Cardiac septum (tissue), 1 donor: ENCODE measurements at regions of chr16 and their contacts with region 1.

Region 1: DNA sequence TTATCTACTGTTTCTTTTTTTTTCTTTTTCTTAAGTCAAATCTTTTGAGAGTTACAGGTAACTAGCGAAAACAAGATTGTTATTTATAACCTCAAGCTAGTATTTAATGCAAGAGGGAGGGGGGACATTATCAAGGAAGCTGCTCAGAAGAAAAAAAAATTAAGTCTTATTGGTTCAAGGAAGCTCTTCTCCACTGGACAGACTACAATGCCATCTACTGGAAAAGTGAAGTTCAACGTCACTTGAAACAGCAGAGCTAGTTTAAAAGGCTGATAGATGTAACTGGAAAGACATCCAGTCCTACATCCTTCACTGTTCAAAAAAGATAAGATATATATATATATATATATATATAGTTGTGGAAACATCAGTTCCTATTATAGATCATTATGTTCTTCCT is 418.0 kb upstream of the PSMD7 start:
- DNase-seq: no peak

Region 2: GRCh38 chr16:72124761-72125634 is 1753.6 kb before region 1 on chr16:
- intact Hi-C with region 1: loop called (anchors 10 kb)
- DNase-seq: no peak

Region 3: GRCh38 chr16:73565262-73565661 is 313.3 kb before region 1 on chr16:
- intact Hi-C with region 1: loop called (anchors 10 kb)
- DNase-seq: no peak

Region 4: DNA sequence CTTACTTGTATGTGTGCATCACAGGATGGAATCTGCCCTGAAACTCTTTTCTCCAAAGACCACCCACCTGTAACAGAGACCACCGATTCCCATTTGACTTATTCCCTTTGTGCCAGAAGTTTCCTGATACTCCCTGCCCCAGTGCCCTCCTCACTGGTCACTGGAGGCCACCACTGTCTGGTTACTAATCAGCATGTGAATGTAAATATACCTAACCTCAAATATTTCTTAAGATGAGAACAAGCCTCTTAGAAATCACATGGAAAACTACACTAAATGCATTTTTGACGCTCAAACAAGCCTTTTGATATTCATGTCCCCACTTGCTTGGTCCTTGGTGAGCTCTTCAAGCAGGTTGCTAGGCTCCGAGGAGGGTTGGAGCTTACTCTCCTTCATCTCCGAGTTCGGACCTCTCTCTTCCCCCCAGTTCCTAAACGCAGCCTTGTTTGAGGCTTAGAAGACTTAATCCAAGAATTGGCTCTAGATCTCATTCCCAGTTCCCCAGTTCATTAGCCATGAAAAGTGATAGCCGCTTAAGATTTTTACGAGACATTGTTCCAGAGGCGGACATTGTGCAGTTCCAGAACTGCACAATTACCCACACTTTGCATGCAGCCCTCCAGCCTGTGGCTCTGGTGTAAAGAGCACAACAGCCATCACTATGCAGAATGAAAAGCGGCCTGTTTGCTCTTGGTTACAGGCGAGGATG is 161.2 kb before region 1 on chr16:
- intact Hi-C with region 1: no loop called
- DNase-seq: no peak